ENCODE measurements at regions of chr21 and their contacts with region 1.

Region 1: GRCh38 chr21:15534450-15534886 is 195.3 kb upstream of the USP25 start:
- DNase-seq: peak; percentile 61
- H3K4me3 ChIP-seq: peak overlapping the region; percentile 8
- H3K27ac ChIP-seq: peak overlapping the region; percentile 67
- H3K4me1 ChIP-seq: peaks cover 12% of the 10 kb centered on the region
- CTCF ChIP-seq: peak; percentile 48

Region 2: GRCh38 chr21:15514073-15514946 is 20.2 kb before region 1 on chr21:
- CTCF ChIA-PET with region 1: no interaction called
- POLR2A ChIA-PET with region 1: interaction called, 16 read pairs
- intact Hi-C with region 1: no loop called
- DNase-seq: peak; percentile 84
- H3K4me3 ChIP-seq: peak overlapping the region; percentile 43
- H3K27ac ChIP-seq: peak overlapping the region; percentile 86
- H3K4me1 ChIP-seq: peaks cover 27% of the 10 kb centered on the region
- CTCF ChIP-seq: no peak

Region 3: DNA sequence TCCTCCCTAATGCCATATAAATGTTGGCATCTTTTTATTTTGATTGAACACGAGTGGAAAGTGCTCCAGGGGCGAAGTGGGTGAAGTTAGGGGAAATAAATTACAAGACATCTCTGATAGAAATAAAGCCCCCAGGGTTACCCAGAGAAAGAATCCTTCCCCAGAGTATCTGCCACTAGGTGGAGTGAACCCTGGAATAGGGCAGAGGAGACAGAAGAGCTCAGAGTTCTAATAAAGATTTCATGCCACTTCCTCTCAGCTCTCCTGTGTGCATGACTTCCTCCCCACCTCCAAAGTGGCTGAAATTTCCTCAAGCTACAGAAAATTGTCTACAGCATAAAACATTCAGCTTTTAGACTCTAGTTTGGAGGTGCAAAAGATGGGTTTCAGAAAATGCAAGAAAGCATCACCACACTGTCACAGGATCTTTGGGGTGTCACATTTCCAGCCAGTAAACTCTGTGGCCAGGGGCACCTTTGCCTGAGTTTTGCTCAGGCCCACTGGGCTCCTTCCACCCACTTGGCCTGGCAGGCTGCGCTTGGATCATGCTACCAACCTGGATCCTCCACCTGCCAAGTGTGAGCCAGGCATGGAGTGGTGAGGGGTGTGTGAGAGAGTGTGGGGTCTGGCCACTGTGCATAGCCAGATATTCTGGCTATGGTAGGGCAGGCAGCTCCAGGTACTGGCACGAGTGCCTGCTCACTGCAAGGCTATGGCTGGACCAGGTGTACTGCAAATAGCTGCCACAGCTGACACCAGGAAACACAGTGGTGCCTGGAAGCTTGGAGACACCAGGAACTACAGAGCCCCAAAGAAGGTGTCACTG is 13.4 kb before region 1 on chr21:
- CTCF ChIA-PET with region 1: interaction called, 3 read pairs
- POLR2A ChIA-PET with region 1: interaction called, 21 read pairs
- intact Hi-C with region 1: no loop called
- DNase-seq: peak; percentile 39
- H3K4me3 ChIP-seq: no peak overlapping the region
- H3K27ac ChIP-seq: no peak overlapping the region
- H3K4me1 ChIP-seq: no peaks in the 10 kb centered on the region
- CTCF ChIP-seq: peak; percentile 65

Region 4: DNA sequence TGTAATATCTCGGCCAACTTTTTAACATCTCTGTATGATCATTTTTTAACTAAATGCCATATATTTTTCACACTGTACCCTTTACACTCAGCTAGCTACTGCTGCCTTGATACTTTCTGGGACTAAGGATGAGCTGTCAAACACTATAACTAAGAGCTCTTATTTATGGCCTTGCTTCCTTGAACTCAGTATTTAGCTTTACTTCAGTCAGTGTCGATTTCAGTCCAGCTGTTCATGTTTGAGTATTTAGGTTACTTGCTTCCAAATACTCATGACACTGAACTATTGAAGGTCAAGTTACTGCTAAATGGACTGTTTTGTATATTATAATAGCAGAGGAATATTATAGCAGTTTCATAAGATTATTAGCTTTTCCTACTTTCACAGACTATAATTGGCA is 169.5 kb after region 1 on chr21:
- CTCF ChIA-PET with region 1: no interaction called
- POLR2A ChIA-PET with region 1: no interaction called
- intact Hi-C with region 1: no loop called
- DNase-seq: no peak
- H3K4me3 ChIP-seq: no peak overlapping the region
- H3K27ac ChIP-seq: no peak overlapping the region
- H3K4me1 ChIP-seq: no peaks in the 10 kb centered on the region
- CTCF ChIP-seq: no peak